ENCODE measurements at regions of chr18 and their contacts with region 1.

Region 1: DNA sequence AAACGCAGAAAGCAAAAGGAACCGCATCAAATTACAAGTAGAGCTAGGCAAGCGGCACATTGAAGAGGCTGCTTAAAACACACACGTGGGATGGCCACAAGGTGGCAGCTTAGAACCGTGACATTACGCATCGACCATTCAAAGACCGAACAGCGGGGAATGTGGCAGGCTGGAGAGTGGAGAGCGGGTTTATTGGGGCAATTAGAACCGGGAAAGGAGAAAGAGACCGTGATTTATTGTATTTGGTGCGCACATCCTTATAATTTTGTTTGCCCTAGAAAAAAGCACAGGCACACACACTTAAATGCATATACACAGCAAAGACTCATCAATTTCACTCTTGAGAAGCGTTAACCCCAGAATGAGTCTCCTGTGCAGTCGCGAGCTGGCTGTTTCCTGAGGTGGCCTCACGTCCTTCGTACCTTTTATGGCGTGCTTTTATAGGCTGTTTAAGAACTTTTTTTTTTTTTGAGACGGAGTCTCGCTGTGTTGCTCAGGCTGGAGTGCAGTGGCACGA is 31.7 kb upstream of the MEP1B start:
- DNase-seq: peak; percentile 68 to 74
- H3K4me3 ChIP-seq: peak overlapping the region; percentile 25
- H3K4me3 Mint-ChIP-seq: peak overlapping the region; percentile 73
- H3K27ac Mint-ChIP-seq: no peak overlapping the region
- H3K4me1 ChIP-seq: peaks cover 6% of the 10 kb centered on the region
- H3K4me1 Mint-ChIP-seq: peaks cover 7% of the 10 kb centered on the region
- H3K27me3 ChIP-seq: no peaks in the 10 kb centered on the region
- H3K27me3 Mint-ChIP-seq: no peaks in the 10 kb centered on the region
- CTCF ChIP-seq: peak; percentile 44 to 62

Region 2: GRCh38 chr18:32213693-32214092 is 55.5 kb after region 1 on chr18:
- CTCF ChIA-PET with region 1: interaction called, 3 read pairs
- POLR2A ChIA-PET with region 1: no interaction called
- intact Hi-C with region 1: loop called (anchors 2 kb)
- DNase-seq: peak in 1 of 2 experiments; percentile 1
- H3K4me3 ChIP-seq: no peak overlapping the region
- H3K4me3 Mint-ChIP-seq: no peak overlapping the region
- H3K27ac Mint-ChIP-seq: no peak overlapping the region
- H3K4me1 ChIP-seq: no peaks in the 10 kb centered on the region
- H3K4me1 Mint-ChIP-seq: no peaks in the 10 kb centered on the region
- H3K27me3 ChIP-seq: no peaks in the 10 kb centered on the region
- H3K27me3 Mint-ChIP-seq: no peaks in the 10 kb centered on the region
- CTCF ChIP-seq: no peak

Region 3: DNA sequence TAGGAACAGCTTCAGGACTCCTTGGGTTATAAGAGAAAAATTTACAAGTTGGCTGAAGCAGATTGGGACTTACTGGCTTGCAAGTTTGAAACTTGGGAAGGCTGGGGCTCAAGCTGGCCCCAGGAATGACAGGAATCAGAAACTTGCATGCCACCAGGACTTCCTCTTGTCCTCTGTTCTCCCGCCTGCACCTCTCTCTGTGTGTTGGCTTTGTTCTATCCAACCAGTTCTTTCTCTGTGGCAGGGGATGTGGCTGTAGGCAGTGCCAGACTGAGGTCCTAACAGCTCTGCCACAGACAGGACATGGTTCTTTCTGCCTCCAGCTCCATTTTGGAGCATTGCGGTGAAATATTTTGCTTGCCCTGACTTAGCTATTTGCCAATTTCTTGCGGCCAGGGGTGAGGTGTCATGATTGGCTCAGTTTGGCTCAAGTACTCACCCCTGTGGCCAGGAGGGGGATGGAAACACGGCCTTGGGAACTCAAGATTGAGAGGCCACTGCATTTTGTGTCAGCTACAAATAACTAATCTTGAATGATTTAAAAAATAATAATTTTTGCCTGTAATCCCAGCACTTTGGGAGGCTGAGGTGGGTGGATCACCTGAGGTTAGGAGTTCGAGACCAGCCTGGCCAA is 80.6 kb after region 1 on chr18:
- CTCF ChIA-PET with region 1: interaction called, 15 read pairs
- POLR2A ChIA-PET with region 1: no interaction called
- intact Hi-C with region 1: loop called (anchors 1 kb)
- DNase-seq: peak in 1 of 2 experiments; percentile 6
- H3K4me3 ChIP-seq: no peak overlapping the region
- H3K4me3 Mint-ChIP-seq: no peak overlapping the region
- H3K27ac Mint-ChIP-seq: no peak overlapping the region
- H3K4me1 ChIP-seq: no peaks in the 10 kb centered on the region
- H3K4me1 Mint-ChIP-seq: no peaks in the 10 kb centered on the region
- H3K27me3 ChIP-seq: no peaks in the 10 kb centered on the region
- H3K27me3 Mint-ChIP-seq: peaks cover 2% of the 10 kb centered on the region
- CTCF ChIP-seq: no peak

Region 4: GRCh38 chr18:32271672-32272208 is 113.6 kb after region 1 on chr18:
- CTCF ChIA-PET with region 1: interaction called, 7 read pairs
- POLR2A ChIA-PET with region 1: no interaction called
- intact Hi-C with region 1: loop called (anchors 1 kb)
- DNase-seq: peak in 1 of 2 experiments; percentile 23
- H3K4me3 ChIP-seq: no peak overlapping the region
- H3K4me3 Mint-ChIP-seq: no peak overlapping the region
- H3K27ac Mint-ChIP-seq: no peak overlapping the region
- H3K4me1 ChIP-seq: no peaks in the 10 kb centered on the region
- H3K4me1 Mint-ChIP-seq: no peaks in the 10 kb centered on the region
- H3K27me3 ChIP-seq: no peaks in the 10 kb centered on the region
- H3K27me3 Mint-ChIP-seq: peaks cover 2% of the 10 kb centered on the region
- CTCF ChIP-seq: peak; percentile 20 to 31

Region 5: GRCh38 chr18:32470713-32471633 is 312.8 kb after region 1 on chr18 and contains the start of gene GAREM1:
- CTCF ChIA-PET with region 1: interaction called, 9 read pairs
- POLR2A ChIA-PET with region 1: no interaction called
- intact Hi-C with region 1: loop called (anchors 1 kb)
- DNase-seq: peak; percentile 85
- H3K4me3 ChIP-seq: peak within 1 kb of the TSS; percentile 44
- H3K4me3 Mint-ChIP-seq: peak within 1 kb of the TSS; percentile 81
- H3K27ac Mint-ChIP-seq: no peak within 1 kb of the TSS
- H3K4me1 ChIP-seq: no peaks in the 10 kb centered on the region
- H3K4me1 Mint-ChIP-seq: no peaks in the 10 kb centered on the region
- H3K27me3 ChIP-seq: no peaks in the 10 kb centered on the region
- H3K27me3 Mint-ChIP-seq: peaks cover 4% of the 10 kb centered on the region
- CTCF ChIP-seq: peak in 1 of 2 experiments; percentile 48
- total RNA-seq, gene GAREM1: 0.50 and 0.51 TPM in 2 replicates

Region 6: DNA sequence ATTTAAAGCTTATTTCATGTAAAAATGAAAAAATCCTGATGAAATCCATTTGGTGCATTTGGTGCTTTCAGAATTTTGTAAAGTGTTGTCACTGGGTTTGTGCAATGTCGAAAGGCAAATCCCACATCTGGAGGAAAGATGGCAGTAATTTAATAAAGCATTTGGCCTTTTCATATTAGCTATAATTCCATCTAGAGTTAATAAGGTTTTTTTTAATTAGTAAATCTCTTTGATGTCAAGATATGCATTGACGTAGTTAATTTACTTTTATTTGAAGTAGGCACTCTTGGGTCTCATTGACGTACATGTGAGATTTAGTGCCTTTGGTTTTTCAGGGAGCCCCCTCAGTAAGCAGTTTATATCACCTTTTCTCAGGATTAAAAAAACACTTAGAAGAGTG is 324.8 kb after region 1 on chr18:
- CTCF ChIA-PET with region 1: no interaction called
- POLR2A ChIA-PET with region 1: no interaction called
- intact Hi-C with region 1: no loop called
- DNase-seq: no peak
- H3K4me3 ChIP-seq: no peak overlapping the region
- H3K4me3 Mint-ChIP-seq: no peak overlapping the region
- H3K27ac Mint-ChIP-seq: no peak overlapping the region
- H3K4me1 ChIP-seq: no peaks in the 10 kb centered on the region
- H3K4me1 Mint-ChIP-seq: no peaks in the 10 kb centered on the region
- H3K27me3 ChIP-seq: no peaks in the 10 kb centered on the region
- H3K27me3 Mint-ChIP-seq: peaks cover 3% of the 10 kb centered on the region
- CTCF ChIP-seq: no peak

Region 7: DNA sequence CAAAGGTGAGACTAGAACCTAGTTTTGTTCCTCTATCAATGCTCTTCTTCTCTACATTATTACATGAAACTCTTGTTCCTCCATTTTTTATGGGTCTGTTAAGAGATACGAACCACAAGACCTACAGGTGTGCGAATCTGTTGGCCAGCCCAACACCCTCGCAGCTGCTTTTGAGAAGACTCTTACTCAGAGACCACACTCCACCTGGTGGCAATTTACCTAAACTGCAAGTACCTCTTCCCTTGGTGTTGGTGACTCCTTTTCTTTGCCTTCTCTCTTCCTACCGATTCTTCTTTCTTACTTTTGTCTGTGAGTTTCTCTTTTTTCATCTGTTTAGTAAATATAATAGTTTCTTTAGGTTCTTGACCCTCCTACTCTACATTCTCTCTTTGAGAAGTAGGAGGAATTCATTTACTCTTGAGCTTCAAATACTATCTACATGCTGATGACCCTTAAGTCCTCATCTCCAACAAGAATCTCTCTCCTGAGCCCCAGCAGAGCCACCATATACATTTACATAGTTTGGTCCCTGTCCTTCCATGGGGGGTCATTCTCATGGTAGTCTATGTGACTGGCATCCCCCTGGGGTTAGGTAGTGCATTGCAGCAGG is 394.4 kb after region 1 on chr18:
- CTCF ChIA-PET with region 1: interaction called, 7 read pairs
- POLR2A ChIA-PET with region 1: no interaction called
- intact Hi-C with region 1: loop called (anchors 1 kb)
- DNase-seq: peak; percentile 43 to 46
- H3K4me3 ChIP-seq: no peak overlapping the region
- H3K4me3 Mint-ChIP-seq: no peak overlapping the region
- H3K27ac Mint-ChIP-seq: no peak overlapping the region
- H3K4me1 ChIP-seq: no peaks in the 10 kb centered on the region
- H3K4me1 Mint-ChIP-seq: no peaks in the 10 kb centered on the region
- H3K27me3 ChIP-seq: no peaks in the 10 kb centered on the region
- H3K27me3 Mint-ChIP-seq: no peaks in the 10 kb centered on the region
- CTCF ChIP-seq: peak; percentile 40 to 51

Measured in Caco-2 (cell line).